Endothelial cell of umbilical vein (primary cell): ENCODE measurements at regions of chr1 and their contacts with region 1.

Region 1: DNA sequence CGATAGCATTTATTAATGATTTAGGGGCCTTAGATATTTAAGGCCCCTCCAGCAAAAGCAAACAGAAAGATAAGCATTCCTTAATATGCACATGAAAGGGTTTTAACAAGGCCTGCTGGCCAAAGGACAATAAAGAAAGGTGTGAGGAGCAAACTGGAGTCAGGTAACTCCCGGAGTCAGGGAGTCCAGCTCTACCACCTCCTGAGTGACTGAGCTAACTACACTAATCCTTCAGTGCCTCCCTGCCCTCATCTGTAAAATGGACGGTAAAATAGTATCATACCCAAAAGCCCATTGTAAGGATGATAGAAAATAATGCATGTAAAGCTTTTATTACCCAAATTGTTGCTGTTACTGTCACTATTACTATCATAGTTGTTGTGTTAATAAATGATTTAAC is 161.7 kb downstream of the SIPA1L2 start:
- DNase-seq: no peak
- H3K4me3 ChIP-seq: no peak overlapping the region
- H3K27ac ChIP-seq: no peak overlapping the region
- H3K4me1 ChIP-seq: peaks cover 11% of the 10 kb centered on the region
- H3K27me3 ChIP-seq: no peaks in the 10 kb centered on the region
- CTCF ChIP-seq: no peak
- POLR2A ChIP-seq: no peak

Region 2: GRCh38 chr1:232454227-232454886 is 13.9 kb before region 1 on chr1:
- CTCF ChIA-PET with region 1: interaction called, 3 read pairs
- POLR2A ChIA-PET with region 1: no interaction called
- dilution Hi-C with region 1: no loop called
- intact Hi-C with region 1: loop called (anchors 2 kb)
- DNase-seq: no peak
- H3K4me3 ChIP-seq: no peak overlapping the region
- H3K27ac ChIP-seq: no peak overlapping the region
- H3K4me1 ChIP-seq: no peaks in the 10 kb centered on the region
- H3K27me3 ChIP-seq: no peaks in the 10 kb centered on the region
- CTCF ChIP-seq: no peak
- POLR2A ChIP-seq: no peak

Region 3: GRCh38 chr1:232493869-232494268 is 25.6 kb after region 1 on chr1:
- CTCF ChIA-PET with region 1: no interaction called
- POLR2A ChIA-PET with region 1: no interaction called
- dilution Hi-C with region 1: no loop called
- intact Hi-C with region 1: no loop called
- DNase-seq: no peak
- H3K4me3 ChIP-seq: no peak overlapping the region
- H3K27ac ChIP-seq: no peak overlapping the region
- H3K4me1 ChIP-seq: no peaks in the 10 kb centered on the region
- H3K27me3 ChIP-seq: no peaks in the 10 kb centered on the region
- CTCF ChIP-seq: no peak
- POLR2A ChIP-seq: no peak